ENCODE measurements at regions of chr1 and their contacts with region 1.

Region 1: DNA sequence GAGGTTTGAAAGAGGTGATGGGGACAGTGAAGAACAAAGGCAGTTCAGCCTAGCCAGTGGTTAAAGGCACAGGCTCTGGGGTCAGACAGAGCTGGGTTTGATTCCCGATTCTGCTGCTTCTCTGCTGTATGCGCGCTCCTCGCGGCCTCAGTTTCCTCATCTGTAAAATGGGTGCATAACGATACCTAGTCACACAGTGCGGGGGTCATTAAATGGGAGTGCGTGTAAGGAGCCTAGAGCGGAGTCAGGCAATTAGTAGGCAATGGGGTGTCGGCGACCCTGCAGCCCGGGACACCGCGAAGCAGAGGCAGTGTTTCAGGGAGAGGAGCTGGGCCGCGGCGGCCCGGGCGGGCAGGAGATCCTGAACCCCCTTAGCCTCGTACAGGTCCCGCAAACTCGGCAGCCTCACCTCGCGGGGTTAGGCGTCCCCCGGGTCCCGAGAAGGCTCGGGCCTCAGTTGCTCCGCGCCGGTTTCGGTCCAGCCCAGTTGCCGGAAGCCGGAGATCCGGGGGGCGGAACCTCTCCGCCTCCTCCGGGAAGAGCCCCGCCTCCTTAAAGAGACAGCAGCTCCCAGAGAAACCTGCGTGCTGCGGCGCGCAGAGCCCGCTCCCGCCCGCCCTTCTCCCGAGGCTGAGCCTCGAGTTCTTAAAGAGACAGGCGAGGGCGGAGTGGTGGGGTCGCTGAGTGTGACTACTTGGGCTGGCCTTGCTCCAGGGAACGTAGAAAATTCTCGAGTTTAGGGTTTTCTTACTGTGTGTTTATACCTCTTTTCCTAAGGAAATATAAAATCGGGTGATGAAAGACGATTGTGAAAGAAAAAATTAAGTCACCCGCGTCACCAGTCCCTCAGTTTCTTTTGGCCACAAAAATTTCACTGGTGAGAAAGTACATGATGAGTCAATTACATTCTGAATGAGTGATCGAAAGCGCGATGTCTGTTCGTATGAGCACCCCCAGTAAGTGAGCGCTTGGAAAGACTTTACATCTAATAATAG is at the start of gene YIPF1:
- DNase-seq: peak; percentile 93
- H3K4me3 ChIP-seq: peak within 1 kb of the TSS; percentile 70 to 88
- H3K27ac ChIP-seq: peak within 1 kb of the TSS; percentile 84 to 85
- H3K4me1 ChIP-seq: no peaks in the 10 kb centered on the region
- H3K27me3 ChIP-seq: no peaks in the 10 kb centered on the region
- CTCF ChIP-seq: no peak
- POLR2A ChIP-seq: peak; percentile 23
- total RNA-seq, gene YIPF1: 40.0 to 105 TPM

Region 2: GRCh38 chr1:53732912-53733317 is 156.7 kb before region 1 on chr1:
- intact Hi-C with region 1: no loop called
- DNase-seq: no peak
- H3K4me3 ChIP-seq: no peak overlapping the region
- H3K27ac ChIP-seq: peak overlapping the region in 1 of 2 donors; percentile 31
- H3K4me1 ChIP-seq: no peaks in the 10 kb centered on the region
- H3K27me3 ChIP-seq: peaks cover 2% of the 10 kb centered on the region
- CTCF ChIP-seq: no peak
- POLR2A ChIP-seq: no peak

Region 3: DNA sequence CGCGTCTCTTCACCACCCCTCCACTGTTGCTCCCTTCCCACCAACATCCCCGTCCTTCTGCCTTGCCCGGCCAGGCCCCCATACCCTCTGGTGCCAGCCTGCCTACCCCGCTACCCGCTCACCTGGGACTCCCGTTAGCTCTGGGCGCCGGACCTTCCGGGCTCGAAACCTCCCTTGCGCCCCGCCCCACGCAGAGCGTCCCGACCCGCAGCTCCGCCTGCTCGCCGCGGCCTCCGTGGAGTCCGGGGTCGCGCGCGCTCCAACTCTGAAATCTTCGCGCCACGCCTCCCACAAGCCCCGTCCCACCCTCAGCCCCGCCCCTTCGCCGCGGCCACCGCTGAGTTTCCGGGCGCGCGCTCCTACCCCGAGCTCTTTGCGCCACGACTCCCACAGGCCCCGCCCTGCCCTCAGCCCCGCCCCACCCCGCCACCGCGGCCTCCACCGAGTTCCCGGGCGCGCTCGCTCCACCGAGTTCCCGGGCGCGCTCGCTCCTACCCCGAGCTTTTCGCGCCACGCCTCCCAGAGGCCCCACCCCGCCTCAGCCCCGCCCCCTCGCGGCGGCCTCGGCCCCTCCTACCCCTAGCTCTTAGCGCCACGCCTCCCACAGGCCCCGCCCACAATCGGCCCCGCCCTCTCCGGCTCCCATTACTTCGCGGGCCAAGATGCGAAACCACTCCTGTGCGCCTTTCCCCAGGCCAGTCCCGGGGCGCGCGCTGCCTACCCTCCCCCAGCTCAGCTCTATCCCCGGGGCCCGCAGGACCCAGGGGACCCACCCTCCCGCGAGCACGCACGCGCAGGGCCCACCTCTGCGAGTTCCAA is 56.0 kb after region 1 on chr1 and contains the start of gene IFT25:
- intact Hi-C with region 1: loop called (anchors 2 kb)
- DNase-seq: peak; percentile 97
- H3K4me3 ChIP-seq: peak within 1 kb of the TSS; percentile 74 to 76
- H3K27ac ChIP-seq: peak within 1 kb of the TSS; percentile 88 to 94
- H3K4me1 ChIP-seq: peaks cover 4% of the 10 kb centered on the region
- H3K27me3 ChIP-seq: no peaks in the 10 kb centered on the region
- CTCF ChIP-seq: peak in 1 of 4 experiments; percentile 23
- POLR2A ChIP-seq: peak; percentile 92
- total RNA-seq, gene IFT25: 13.7 to 18.9 TPM

Region 4: GRCh38 chr1:54121482-54122134 is 232.0 kb after region 1 on chr1:
- intact Hi-C with region 1: no loop called
- DNase-seq: peak; percentile 76
- H3K4me3 ChIP-seq: peak overlapping the region in 1 of 2 donors; percentile 20
- H3K27ac ChIP-seq: no peak overlapping the region
- H3K4me1 ChIP-seq: peaks cover 3% of the 10 kb centered on the region
- H3K27me3 ChIP-seq: no peaks in the 10 kb centered on the region
- CTCF ChIP-seq: peak; percentile 36 to 88 (median 80)
- POLR2A ChIP-seq: no peak